CD8-positive, alpha-beta T cell (primary cell): ENCODE measurements at regions of chr10 and their contacts with region 1.

Region 1: DNA sequence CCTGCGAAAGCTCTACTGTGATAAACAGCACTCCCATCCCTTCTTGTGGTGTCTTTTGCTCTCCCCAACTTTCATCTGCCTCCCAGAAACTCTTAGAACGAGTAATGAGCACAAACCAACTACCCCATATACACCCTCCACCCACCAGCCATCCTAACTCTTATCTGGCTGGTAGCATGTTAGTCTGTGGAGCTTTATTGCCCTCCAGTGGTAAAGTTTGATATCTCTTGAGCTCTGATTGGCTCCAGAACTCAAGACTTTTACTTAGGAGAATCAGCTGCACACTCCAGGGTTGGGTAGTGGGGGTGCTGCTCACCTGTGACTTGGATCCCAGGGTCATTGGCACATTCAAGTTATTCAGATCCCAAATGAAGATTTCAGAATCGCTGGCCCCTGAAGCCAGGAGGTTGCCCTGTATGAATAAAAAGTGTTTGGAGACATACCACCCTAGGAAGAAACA is 10.9 kb downstream of the SEC31B start:
- DNase-seq: peak in 6 of 9 experiments; percentile 40 to 85 (median 50)
- ATAC-seq: peak; percentile 45
- H3K4me3 ChIP-seq: peak overlapping the region in 1 of 2 experiments; percentile 10
- H3K4me3 Mint-ChIP-seq: peak overlapping the region; percentile 66
- H3K27ac ChIP-seq: peak overlapping the region; percentile 25 to 62
- H3K27ac Mint-ChIP-seq: peak overlapping the region; percentile 94
- H3K4me1 ChIP-seq: peaks cover 63% of the 10 kb centered on the region
- H3K4me1 Mint-ChIP-seq: peaks cover 73% of the 10 kb centered on the region
- H3K27me3 ChIP-seq: no peaks in the 10 kb centered on the region
- H3K27me3 Mint-ChIP-seq: no peaks in the 10 kb centered on the region
- CTCF ChIP-seq: peak; percentile 76

Region 2: GRCh38 chr10:99845837-99846382 is 662.8 kb before region 1 on chr10:
- CTCF ChIA-PET with region 1: interaction called, 3 read pairs
- POLR2A ChIA-PET with region 1: no interaction called
- intact Hi-C with region 1: loop called in 1 of 2 experiments (anchors 2 kb)
- DNase-seq: peak; percentile 28 to 87 (median 72)
- ATAC-seq: peak; percentile 84
- H3K4me3 ChIP-seq: peak overlapping the region in 1 of 2 experiments; percentile 7
- H3K4me3 Mint-ChIP-seq: peak overlapping the region; percentile 30
- H3K27ac ChIP-seq: no peak overlapping the region
- H3K27ac Mint-ChIP-seq: no peak overlapping the region
- H3K4me1 ChIP-seq: no peaks in the 10 kb centered on the region
- H3K4me1 Mint-ChIP-seq: peaks cover 7% of the 10 kb centered on the region
- H3K27me3 ChIP-seq: no peaks in the 10 kb centered on the region
- H3K27me3 Mint-ChIP-seq: no peaks in the 10 kb centered on the region
- CTCF ChIP-seq: peak; percentile 94

Region 3: GRCh38 chr10:100286051-100287033 is 222.4 kb before region 1 on chr10 and contains the start of gene BLOC1S2:
- CTCF ChIA-PET with region 1: no interaction called
- POLR2A ChIA-PET with region 1: no interaction called
- intact Hi-C with region 1: loop called in 1 of 2 experiments (anchors 1 kb)
- DNase-seq: peak; percentile 66 to 95 (median 84)
- ATAC-seq: peak; percentile 78
- H3K4me3 ChIP-seq: peak within 1 kb of the TSS; percentile 79 to 91
- H3K4me3 Mint-ChIP-seq: peak within 1 kb of the TSS; percentile 100
- H3K27ac ChIP-seq: peak within 1 kb of the TSS; percentile 86 to 87
- H3K27ac Mint-ChIP-seq: peak within 1 kb of the TSS; percentile 100
- H3K4me1 ChIP-seq: peaks cover 24% of the 10 kb centered on the region
- H3K4me1 Mint-ChIP-seq: peaks cover 29% of the 10 kb centered on the region
- H3K27me3 ChIP-seq: no peaks in the 10 kb centered on the region
- H3K27me3 Mint-ChIP-seq: no peaks in the 10 kb centered on the region
- CTCF ChIP-seq: no peak
- total RNA-seq, gene BLOC1S2: 58.4 to 59.7 TPM

Region 4: GRCh38 chr10:100346765-100347567 is 161.8 kb before region 1 on chr10 and contains the start of gene SCD:
- CTCF ChIA-PET with region 1: interaction called, 113 read pairs
- POLR2A ChIA-PET with region 1: interaction called, 3 read pairs
- intact Hi-C with region 1: loop called in 1 of 2 experiments (anchors 1 kb)
- DNase-seq: peak; percentile 46 to 91 (median 72)
- ATAC-seq: peak; percentile 86
- H3K4me3 ChIP-seq: peak within 1 kb of the TSS; percentile 63 to 79
- H3K4me3 Mint-ChIP-seq: peak within 1 kb of the TSS; percentile 93
- H3K27ac ChIP-seq: peak within 1 kb of the TSS in 1 of 2 experiments; percentile 36
- H3K27ac Mint-ChIP-seq: peak within 1 kb of the TSS; percentile 60
- H3K4me1 ChIP-seq: peaks cover 6% of the 10 kb centered on the region
- H3K4me1 Mint-ChIP-seq: peaks cover 31% of the 10 kb centered on the region
- H3K27me3 ChIP-seq: no peaks in the 10 kb centered on the region
- H3K27me3 Mint-ChIP-seq: no peaks in the 10 kb centered on the region
- CTCF ChIP-seq: no peak
- total RNA-seq, gene SCD: 5.4 TPM

Region 5: DNA sequence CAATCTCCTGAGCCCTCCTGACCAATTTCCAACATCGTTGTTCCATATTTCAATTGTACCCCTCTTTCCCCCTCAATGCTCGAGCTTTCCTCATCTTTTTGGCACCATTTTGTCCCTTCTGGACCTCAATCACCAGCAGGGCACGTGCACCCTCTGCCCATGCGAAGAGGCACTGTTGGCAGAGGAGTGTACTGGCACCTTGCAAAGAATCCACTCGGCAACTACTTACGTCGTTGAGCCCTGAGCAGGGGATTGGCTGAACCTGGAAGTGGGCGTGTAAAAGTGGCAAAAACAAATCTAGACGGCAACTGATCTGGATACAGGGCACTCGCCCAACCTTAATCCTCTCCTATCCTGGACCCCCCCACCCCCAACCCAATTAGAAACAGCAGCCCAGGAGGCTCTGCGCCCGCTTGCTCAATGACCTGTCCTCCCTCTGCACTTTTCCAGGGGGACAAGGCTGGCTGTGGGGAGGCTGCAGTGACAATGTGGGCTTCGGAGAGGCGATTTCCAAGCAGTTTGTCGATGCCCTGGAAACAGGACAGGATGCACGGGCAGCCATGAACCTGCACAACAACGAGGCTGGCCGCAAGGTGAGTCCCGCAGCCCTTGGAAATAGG is 27.1 kb before region 1 on chr10:
- CTCF ChIA-PET with region 1: interaction called, 238 read pairs
- POLR2A ChIA-PET with region 1: interaction called, 8 read pairs
- intact Hi-C with region 1: loop called (anchors 1 kb)
- DNase-seq: peak; percentile 85 to 98 (median 90)
- ATAC-seq: peak; percentile 97
- H3K4me3 ChIP-seq: peak overlapping the region; percentile 61 to 74
- H3K4me3 Mint-ChIP-seq: peak overlapping the region; percentile 87
- H3K27ac ChIP-seq: peak overlapping the region in 1 of 2 experiments; percentile 21
- H3K27ac Mint-ChIP-seq: no peak overlapping the region
- H3K4me1 ChIP-seq: peaks cover 10% of the 10 kb centered on the region
- H3K4me1 Mint-ChIP-seq: peaks cover 19% of the 10 kb centered on the region
- H3K27me3 ChIP-seq: no peaks in the 10 kb centered on the region
- H3K27me3 Mint-ChIP-seq: peaks cover 22% of the 10 kb centered on the region
- CTCF ChIP-seq: no peak

Region 6: DNA sequence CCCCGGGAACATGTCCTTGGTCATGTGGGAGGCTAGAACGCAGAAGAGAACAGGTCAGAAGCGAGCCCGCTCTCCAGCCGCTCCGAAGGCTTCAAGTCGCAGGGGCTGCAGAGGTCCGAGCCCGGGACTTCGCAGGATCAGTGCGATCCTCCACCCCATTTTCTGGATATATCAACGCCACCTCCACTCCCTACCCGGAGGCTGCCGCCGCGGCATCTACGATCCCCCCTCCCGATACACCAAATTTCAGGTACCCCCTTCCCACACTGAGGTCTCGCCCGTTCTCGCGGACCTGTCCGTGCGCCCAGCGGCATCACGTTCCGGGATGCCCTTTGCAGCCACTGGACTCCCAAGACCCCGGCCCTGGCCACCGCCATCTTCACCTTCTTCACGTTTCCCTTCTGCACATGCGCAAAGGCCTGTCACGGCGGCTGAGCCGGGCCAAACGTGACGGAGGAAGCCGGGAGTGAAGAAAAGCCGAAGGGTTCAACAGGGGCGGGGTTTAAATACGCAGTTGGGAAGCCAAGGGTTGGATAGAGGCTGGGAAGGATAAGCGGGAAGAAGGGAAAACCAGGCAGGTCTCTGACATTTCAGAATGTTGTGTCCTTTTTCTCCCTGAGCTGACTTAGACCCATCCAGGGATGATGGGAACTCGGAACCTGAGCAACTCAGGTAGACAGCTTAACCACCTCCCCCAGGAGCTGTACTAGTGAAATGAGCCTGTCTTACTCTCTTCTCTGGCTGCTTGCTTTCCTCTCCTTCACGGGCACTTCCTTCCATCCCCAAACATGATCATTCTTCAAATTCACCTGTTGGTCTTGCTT is 21.0 kb after region 1 on chr10 and contains the start of gene NDUFB8:
- CTCF ChIA-PET with region 1: interaction called, 133 read pairs
- POLR2A ChIA-PET with region 1: interaction called, 6 read pairs
- intact Hi-C with region 1: loop called (anchors 1 to 2 kb)
- DNase-seq: peak; percentile 74 to 92 (median 87)
- ATAC-seq: peak; percentile 84
- H3K4me3 ChIP-seq: peak within 1 kb of the TSS; percentile 81 to 99
- H3K4me3 Mint-ChIP-seq: peak within 1 kb of the TSS; percentile 99
- H3K27ac ChIP-seq: peak within 1 kb of the TSS; percentile 77 to 83
- H3K27ac Mint-ChIP-seq: peak within 1 kb of the TSS; percentile 93
- H3K4me1 ChIP-seq: peaks cover 35% of the 10 kb centered on the region
- H3K4me1 Mint-ChIP-seq: peaks cover 38% of the 10 kb centered on the region
- H3K27me3 ChIP-seq: no peaks in the 10 kb centered on the region
- H3K27me3 Mint-ChIP-seq: no peaks in the 10 kb centered on the region
- CTCF ChIP-seq: no peak
- total RNA-seq, gene NDUFB8: 156 to 163 TPM